ENCODE measurements at regions of chr17 and their contacts with region 1.

Region 1: DNA sequence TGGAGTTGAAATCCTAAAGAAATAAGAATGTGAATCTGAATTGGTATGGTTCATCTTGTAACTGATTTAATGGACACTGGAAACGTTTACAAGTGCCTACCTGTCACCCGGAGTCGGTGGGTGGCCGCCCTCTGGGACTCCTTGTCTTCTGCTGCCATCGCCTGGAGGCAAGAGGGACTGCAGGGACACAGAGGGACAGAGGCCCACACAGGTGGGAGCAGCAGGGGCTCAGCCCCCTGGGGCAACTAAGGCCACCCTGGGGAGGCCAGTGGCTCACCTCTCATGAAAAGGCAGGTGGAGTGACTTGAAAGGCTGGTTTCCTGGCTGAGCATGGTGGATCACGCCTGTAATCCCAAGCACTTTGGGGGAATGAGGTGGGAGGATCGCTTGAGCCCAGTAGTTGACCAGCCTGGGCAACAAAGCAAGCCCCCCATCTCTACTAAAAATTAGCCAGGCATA is 23.2 kb downstream of the TMEM92 start:
- DNase-seq: no peak
- H3K4me3 ChIP-seq: no peak overlapping the region
- H3K27me3 ChIP-seq: peaks cover 1% of the 10 kb centered on the region; the same call in 1 of the 2 replicates
- CTCF ChIP-seq: peak; percentile 97

Region 2: DNA sequence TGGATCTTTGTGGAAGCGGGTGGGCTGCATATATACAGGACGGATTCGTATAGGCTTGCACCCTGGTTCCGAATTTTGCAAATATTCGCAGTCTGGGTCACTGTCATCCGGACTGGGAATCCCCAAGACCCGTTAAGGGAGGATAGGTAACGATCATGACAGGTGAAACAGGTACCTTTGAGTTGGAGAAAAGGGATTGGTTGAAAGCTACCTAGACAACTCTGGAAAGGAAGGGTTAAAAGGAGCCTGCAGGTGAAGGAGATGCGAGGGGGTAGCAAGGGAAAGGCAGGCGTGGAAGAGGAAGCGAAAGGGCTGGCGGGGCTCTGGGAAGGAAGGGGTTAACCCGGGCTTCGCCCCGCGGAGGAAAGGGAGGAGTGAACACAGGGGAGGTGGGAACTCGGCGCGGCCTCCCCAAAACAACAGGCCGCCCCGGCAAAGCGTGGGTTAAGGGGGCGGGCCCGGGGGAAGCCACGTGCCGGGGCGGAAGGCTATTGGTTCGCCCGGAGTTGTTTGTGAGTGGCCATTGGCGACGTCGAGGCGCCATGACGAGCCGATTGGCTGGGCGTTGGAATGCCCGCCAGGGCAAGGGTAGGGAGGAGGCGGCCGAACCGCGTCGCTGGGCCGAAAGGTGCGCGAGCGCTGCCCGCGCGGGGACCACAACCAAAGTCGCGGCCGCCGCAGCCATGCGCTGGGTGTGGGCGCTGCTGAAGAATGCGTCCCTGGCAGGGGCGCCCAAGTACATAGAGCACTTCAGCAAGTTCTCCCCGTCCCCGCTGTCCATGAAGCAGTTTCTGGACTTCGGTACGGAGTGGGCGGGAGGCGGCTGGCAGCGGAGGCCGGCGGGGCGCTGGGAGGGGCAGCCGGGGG is 202.4 kb before region 1 on chr17 and contains the start of gene PDK2:
- CTCF ChIA-PET with region 1: interaction called, 116 read pairs
- POLR2A ChIA-PET with region 1: no interaction called
- DNase-seq: peak; percentile 63
- H3K4me3 ChIP-seq: peak within 1 kb of the TSS; percentile 91
- H3K27me3 ChIP-seq: no peaks in the 10 kb centered on the region
- CTCF ChIP-seq: no peak
- polyA plus RNA-seq, gene PDK2: 79.3 and 155 TPM in 2 replicates

Region 3: GRCh38 chr17:50139950-50140871 is 157.2 kb before region 1 on chr17:
- CTCF ChIA-PET with region 1: interaction called, 12 read pairs
- POLR2A ChIA-PET with region 1: no interaction called
- DNase-seq: no peak
- H3K4me3 ChIP-seq: no peak overlapping the region
- H3K27me3 ChIP-seq: no peaks in the 10 kb centered on the region
- CTCF ChIP-seq: peak; percentile 95

Region 4: DNA sequence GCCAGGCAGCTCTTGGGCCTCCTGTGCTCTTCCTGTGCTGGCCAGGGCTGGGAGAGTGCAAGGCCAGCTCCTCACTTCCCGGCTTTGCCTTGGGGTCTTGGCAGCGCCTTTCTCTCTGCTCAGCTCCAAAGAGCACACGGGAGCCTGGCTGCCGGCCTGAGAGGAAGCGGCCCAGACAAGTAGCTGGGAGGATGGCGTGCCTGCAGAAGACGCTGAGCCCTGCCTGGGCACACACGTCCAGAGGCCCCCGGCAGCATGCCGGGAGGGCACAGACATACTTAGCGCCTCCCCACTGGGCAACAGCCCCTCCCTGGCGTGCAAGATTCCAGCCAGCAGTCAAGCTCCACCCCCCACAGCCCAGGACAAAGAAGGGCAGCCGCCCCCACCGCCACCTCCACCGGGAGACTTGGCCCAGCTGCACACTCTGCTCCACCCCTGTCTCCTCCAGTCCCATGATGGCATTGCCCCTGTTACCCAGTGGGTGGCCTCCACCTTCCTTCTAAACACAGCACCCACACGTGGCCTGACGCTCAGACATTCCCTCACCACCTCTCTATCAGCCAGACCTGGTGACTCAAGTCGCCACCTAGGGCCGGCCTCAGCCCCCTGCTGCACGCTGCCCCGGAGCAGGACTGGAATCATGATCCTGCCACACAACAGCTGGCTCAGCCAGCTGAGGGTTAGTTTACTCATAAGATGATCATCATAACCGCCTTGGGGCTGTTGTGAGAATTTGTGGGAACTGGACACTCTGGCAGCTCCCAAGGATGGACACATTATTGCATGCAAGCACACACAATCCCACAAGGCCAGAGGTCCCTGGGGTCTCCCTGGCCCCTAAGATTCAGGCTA is 119.2 kb before region 1 on chr17:
- CTCF ChIA-PET with region 1: interaction called, 27 read pairs
- POLR2A ChIA-PET with region 1: interaction called, 4 read pairs
- DNase-seq: peak; percentile 93
- H3K4me3 ChIP-seq: no peak overlapping the region
- H3K27me3 ChIP-seq: no peaks in the 10 kb centered on the region
- CTCF ChIP-seq: peak; percentile 69

Region 5: DNA sequence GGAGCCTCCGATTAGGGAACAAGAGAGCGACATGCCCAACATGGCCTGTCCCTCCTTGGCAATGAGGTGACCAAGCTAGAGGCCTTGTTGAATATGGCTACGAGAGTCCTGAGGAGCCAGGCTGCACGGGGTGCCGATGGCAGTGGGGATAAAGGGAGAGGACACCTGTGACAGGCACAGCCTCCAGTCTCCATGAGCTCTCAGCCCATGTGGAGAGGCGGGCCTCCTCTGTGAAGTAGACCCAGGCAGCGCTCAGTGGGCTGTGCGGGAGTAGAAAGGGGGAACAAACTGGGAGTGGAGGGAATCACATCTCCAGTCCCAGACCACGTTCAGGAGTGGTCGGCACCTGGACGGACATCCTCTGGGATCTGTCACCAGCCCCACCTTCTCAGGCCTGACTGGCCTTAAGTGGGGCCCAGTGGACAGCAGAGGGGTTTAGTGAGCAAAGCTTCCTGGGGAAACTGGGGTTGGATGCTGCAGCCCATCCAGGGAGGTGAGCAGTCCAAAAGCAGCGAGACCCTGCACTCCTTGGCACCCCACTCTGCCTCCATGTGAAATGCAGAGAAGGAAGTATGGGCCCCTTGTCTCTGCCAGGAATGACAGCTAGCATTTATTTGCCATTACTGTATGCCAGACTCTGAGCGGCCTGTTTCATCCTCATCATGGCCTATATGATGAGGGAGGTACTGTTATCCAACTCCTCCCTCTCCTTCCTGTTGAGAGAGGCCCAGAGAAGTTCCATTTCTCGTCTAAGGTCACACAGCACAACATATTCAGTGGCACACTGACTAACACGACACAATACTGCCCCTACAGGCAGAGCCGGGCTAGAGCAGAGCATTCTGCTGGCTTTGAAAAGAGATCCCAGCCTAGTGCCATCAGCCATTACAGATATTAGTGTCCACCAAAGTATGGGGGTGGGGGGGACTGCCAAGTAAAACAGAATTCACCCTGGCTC is 27.7 kb before region 1 on chr17:
- CTCF ChIA-PET with region 1: interaction called, 14 read pairs
- POLR2A ChIA-PET with region 1: interaction called, 3 read pairs
- DNase-seq: no peak
- H3K4me3 ChIP-seq: peak overlapping the region; percentile 41
- H3K27me3 ChIP-seq: no peaks in the 10 kb centered on the region
- CTCF ChIP-seq: peak; percentile 91

Region 6: GRCh38 chr17:50308666-50309065 is 11.2 kb after region 1 on chr17:
- CTCF ChIA-PET with region 1: interaction called, 16 read pairs
- POLR2A ChIA-PET with region 1: no interaction called
- DNase-seq: no peak
- H3K4me3 ChIP-seq: no peak overlapping the region
- H3K27me3 ChIP-seq: peaks cover 10% of the 10 kb centered on the region
- CTCF ChIP-seq: no peak